B cell (primary cell): ENCODE measurements at regions of chr22 and their contacts with region 1.

Region 1: DNA sequence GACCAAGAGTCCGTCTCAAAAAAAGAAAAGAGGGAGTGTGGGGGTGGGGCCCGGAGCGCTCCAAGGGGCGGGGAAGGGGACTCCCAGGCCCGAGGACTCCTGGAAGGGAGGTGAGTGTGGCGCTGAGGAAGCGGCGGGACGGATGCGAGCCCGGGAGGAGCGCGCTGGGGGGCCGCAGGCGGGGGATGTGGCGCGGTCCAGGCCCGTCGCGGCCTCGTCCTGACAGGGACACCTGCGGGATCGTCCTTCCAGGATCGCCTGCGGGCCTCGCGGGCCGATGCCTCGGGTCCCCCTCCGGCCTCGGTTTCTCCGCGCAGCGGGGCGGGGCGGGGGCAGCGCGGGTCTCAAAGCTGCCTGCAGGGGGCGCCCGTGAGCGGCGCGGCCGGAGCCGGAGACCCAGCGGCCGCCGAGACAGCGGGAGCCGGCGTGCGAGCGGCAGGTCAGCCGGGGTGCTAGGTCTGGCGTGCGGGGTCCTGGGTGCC is 3.8 kb upstream of the ADORA2A start:
- DNase-seq: peak; percentile 79
- ATAC-seq: peak; percentile 19
- H3K4me3 ChIP-seq: peak overlapping the region in 3 of 5 experiments; percentile 67 to 82 (median 68)
- H3K4me3 Mint-ChIP-seq: peak overlapping the region; percentile 66
- H3K27ac ChIP-seq: peak overlapping the region in 1 of 2 donors; percentile 65
- H3K27ac Mint-ChIP-seq: peak overlapping the region; percentile 26
- H3K4me1 ChIP-seq: peaks cover 38 to 51% of the 10 kb centered on the region in 2 donors
- H3K4me1 Mint-ChIP-seq: peaks cover 45% of the 10 kb centered on the region
- H3K27me3 ChIP-seq: peaks cover 0 to 3% (median 0%) of the 10 kb centered on the region in 4 experiments
- H3K27me3 Mint-ChIP-seq: no peaks in the 10 kb centered on the region
- CTCF ChIP-seq: peak; percentile 89

Region 2: GRCh38 chr22:23922651-23923320 is 500.8 kb before region 1 on chr22:
- CTCF ChIA-PET with region 1: no interaction called
- POLR2A ChIA-PET with region 1: no interaction called
- intact Hi-C with region 1: no loop called
- DNase-seq: peak; percentile 1
- ATAC-seq: no peak
- H3K4me3 ChIP-seq: no peak overlapping the region
- H3K4me3 Mint-ChIP-seq: no peak overlapping the region
- H3K27ac ChIP-seq: no peak overlapping the region
- H3K27ac Mint-ChIP-seq: no peak overlapping the region
- H3K4me1 ChIP-seq: no peaks in the 10 kb centered on the region
- H3K4me1 Mint-ChIP-seq: no peaks in the 10 kb centered on the region
- H3K27me3 ChIP-seq: no peaks in the 10 kb centered on the region
- H3K27me3 Mint-ChIP-seq: no peaks in the 10 kb centered on the region
- CTCF ChIP-seq: no peak

Region 3: DNA sequence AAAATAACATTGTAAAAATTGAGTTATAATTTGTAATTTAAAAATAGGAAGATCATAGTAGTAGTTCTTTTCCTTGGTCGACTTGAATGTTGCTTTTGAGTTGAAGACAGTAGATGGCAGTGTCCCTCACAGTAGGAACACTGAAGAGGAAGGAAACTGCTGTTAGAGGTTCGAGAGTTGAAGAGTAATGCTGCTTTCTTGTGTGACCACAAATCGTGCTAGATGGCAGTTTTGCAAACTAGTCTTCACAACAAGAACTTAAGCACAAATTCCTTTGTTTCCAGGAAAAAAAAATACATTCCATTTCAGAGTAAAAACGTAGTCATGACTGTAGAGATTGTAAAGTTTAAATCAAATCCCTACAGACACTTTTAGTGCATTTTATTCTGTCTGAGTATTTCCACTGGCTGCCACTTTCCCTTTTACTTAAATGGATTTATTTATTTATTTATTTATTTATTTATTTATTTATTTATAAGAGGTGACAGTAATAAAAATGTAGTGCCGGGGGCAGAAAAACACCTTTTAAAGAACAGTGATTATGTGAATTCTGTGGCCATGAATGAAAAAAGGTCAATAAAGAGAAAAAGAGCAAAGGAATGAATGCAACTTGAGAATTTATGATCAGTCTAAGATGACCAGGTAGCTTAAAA is 98.3 kb before region 1 on chr22:
- CTCF ChIA-PET with region 1: no interaction called
- POLR2A ChIA-PET with region 1: no interaction called
- intact Hi-C with region 1: loop called (anchors 5 kb)
- DNase-seq: peak; percentile 71
- ATAC-seq: peak; percentile 76
- H3K4me3 ChIP-seq: no peak overlapping the region
- H3K4me3 Mint-ChIP-seq: no peak overlapping the region
- H3K27ac ChIP-seq: no peak overlapping the region
- H3K27ac Mint-ChIP-seq: peak overlapping the region; percentile 26
- H3K4me1 ChIP-seq: peaks cover 7 to 8% of the 10 kb centered on the region in 2 donors
- H3K4me1 Mint-ChIP-seq: peaks cover 19% of the 10 kb centered on the region
- H3K27me3 ChIP-seq: no peaks in the 10 kb centered on the region
- H3K27me3 Mint-ChIP-seq: no peaks in the 10 kb centered on the region
- CTCF ChIP-seq: peak; percentile 85

Region 4: DNA sequence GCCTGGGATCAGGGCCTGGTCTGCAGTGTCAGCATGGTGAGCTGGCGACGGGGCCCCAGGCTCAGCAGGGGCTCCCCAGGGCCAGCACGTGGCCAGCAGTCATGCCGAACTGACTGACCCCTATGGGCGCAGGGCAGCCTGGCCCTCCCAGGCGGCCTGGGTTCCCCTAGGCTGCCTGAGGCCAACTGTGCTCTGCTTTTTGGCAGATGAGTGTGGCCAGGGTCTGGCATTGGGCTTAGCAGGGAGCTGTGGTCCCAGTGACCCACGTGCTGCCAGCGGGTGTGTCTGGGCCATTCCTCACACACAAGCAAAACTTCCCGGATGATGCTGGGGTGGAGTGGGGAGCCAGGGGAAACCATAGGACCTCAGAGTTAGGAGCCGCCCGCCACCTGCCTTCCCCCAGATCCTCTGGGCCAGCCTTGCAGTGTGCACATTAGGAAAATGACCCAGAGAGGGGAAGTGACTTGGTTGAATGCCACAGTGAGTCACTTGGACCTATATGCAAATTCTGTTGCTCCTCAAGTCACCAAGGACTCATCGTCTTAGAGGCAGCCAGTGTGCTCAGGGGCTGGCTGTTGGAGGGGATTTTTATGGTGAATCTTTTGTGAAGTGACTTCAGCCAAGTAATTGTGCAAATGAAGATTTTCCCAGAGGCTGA is 10.4 kb after region 1 on chr22:
- CTCF ChIA-PET with region 1: interaction called, 147 read pairs
- POLR2A ChIA-PET with region 1: interaction called, 42 read pairs
- intact Hi-C with region 1: loop called (anchors 1 kb)
- DNase-seq: peak; percentile 90
- ATAC-seq: peak; percentile 75
- H3K4me3 ChIP-seq: peak overlapping the region in 4 of 5 experiments; percentile 20 to 35 (median 25)
- H3K4me3 Mint-ChIP-seq: peak overlapping the region; percentile 80
- H3K27ac ChIP-seq: peak overlapping the region; percentile 98 to 99
- H3K27ac Mint-ChIP-seq: peak overlapping the region; percentile 97
- H3K4me1 ChIP-seq: peaks cover 98 to 100% of the 10 kb centered on the region in 2 donors
- H3K4me1 Mint-ChIP-seq: peaks cover 95% of the 10 kb centered on the region
- H3K27me3 ChIP-seq: no peaks in the 10 kb centered on the region
- H3K27me3 Mint-ChIP-seq: no peaks in the 10 kb centered on the region
- CTCF ChIP-seq: no peak

Region 5: DNA sequence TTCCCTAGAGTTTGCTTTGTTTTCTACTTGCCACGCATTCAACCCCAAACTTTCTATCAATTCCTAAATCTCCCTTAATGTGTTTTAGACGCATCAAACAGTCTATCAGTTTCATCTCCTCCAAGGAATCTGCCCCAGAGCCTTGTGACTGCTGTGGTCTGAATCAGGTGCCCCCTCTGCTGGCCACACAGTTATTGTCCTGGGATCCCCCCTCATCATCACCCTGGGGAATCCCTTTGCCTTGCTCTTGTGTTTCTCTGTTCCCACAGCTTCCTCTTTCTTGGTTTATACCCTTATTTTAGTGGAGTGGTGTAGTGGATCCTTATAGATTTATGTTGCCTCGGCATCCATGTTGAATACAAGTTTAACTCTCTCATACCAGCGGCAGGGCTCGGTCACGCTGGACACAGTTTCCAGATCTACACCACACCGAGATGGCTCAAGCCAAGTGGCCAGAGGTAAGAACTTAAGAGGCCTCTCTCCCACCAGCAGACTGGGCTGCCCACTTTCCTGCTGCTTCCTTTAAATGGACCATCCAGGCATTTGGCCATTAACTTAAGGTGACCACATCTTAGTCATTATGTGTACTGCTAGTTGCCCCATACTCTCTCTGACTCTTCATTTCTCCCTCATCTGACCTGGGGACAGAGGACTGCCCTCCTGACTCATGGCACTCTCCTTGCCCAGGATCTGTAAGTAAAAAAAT is 79.7 kb after region 1 on chr22:
- CTCF ChIA-PET with region 1: interaction called, 173 read pairs
- POLR2A ChIA-PET with region 1: interaction called, 8 read pairs
- intact Hi-C with region 1: loop called (anchors 1 kb)
- DNase-seq: peak; percentile 92
- ATAC-seq: peak; percentile 90
- H3K4me3 ChIP-seq: no peak overlapping the region
- H3K4me3 Mint-ChIP-seq: no peak overlapping the region
- H3K27ac ChIP-seq: peak overlapping the region in 1 of 2 donors; percentile 55
- H3K27ac Mint-ChIP-seq: peak overlapping the region; percentile 27
- H3K4me1 ChIP-seq: peaks cover 27 to 34% of the 10 kb centered on the region in 2 donors
- H3K4me1 Mint-ChIP-seq: peaks cover 43% of the 10 kb centered on the region
- H3K27me3 ChIP-seq: peaks cover 0 to 2% (median 0%) of the 10 kb centered on the region in 4 experiments
- H3K27me3 Mint-ChIP-seq: no peaks in the 10 kb centered on the region
- CTCF ChIP-seq: peak; percentile 75

Region 6: DNA sequence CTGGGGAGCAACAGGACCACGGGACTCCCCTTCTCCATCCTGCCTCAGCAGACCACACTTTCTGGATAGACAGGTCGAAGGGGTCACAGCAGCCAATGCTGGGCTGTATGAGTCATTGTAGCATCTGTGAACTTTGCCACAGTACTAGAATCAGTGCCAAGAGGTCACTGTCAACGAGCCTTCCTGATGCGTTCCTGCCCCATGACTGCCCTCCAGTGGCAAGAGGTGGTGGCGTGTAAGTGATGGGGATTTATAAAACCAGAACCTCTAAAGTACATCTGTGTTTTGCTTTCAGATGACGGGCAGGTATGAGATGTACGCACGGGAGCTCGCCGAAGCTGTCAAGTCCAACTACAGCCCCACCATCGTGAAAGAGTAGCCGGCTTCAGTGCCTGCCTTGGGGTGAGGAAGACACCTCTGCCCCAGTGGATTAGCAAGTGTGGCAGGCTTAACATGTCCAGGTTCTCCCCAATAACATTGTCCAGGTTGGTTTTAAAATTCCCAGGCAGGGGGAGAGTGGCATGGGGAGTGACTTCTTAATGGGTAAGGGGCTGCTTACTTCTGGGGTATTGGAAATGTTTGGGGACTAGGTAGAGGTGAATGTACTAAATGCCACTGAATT is 102.0 kb after region 1 on chr22:
- CTCF ChIA-PET with region 1: interaction called, 157 read pairs
- POLR2A ChIA-PET with region 1: interaction called, 3 read pairs
- intact Hi-C with region 1: loop called (anchors 1 kb)
- DNase-seq: peak; percentile 86
- ATAC-seq: peak; percentile 93
- H3K4me3 ChIP-seq: no peak overlapping the region
- H3K4me3 Mint-ChIP-seq: no peak overlapping the region
- H3K27ac ChIP-seq: no peak overlapping the region
- H3K27ac Mint-ChIP-seq: peak overlapping the region; percentile 16
- H3K4me1 ChIP-seq: peaks cover 12 to 16% of the 10 kb centered on the region in 2 donors
- H3K4me1 Mint-ChIP-seq: peaks cover 17% of the 10 kb centered on the region
- H3K27me3 ChIP-seq: no peaks in the 10 kb centered on the region
- H3K27me3 Mint-ChIP-seq: no peaks in the 10 kb centered on the region
- CTCF ChIP-seq: peak; percentile 84